Calu3 (cell line): ENCODE measurements at regions of chr16 and their contacts with region 1.

Region 1: DNA sequence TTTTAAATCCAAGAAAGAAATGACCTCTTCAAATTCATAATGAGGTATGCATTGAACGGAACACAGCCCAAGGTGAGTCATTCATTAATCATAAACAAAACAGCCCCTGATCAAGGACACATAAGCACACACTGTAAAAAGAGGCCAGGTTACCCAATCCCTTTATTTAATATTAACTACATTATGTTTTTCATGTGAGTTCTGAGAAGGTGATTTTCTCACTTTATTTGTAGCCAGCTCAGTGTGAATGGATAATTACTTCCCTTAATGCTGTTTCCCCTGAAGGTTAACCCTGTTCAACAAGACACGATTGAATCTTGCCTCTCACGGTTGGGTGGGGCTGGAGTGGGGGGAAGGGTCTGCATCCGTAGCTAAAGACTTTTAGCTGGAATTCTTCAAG is 257.3 kb upstream of the SALL1 start:
- DNase-seq: peak; percentile 70
- H3K4me3 Mint-ChIP-seq: peak overlapping the region; percentile 33
- H3K27ac Mint-ChIP-seq: peak overlapping the region; percentile 92
- H3K4me1 Mint-ChIP-seq: peaks cover 90% of the 10 kb centered on the region
- H3K27me3 Mint-ChIP-seq: no peaks in the 10 kb centered on the region
- CTCF ChIP-seq: no peak

Region 2: DNA sequence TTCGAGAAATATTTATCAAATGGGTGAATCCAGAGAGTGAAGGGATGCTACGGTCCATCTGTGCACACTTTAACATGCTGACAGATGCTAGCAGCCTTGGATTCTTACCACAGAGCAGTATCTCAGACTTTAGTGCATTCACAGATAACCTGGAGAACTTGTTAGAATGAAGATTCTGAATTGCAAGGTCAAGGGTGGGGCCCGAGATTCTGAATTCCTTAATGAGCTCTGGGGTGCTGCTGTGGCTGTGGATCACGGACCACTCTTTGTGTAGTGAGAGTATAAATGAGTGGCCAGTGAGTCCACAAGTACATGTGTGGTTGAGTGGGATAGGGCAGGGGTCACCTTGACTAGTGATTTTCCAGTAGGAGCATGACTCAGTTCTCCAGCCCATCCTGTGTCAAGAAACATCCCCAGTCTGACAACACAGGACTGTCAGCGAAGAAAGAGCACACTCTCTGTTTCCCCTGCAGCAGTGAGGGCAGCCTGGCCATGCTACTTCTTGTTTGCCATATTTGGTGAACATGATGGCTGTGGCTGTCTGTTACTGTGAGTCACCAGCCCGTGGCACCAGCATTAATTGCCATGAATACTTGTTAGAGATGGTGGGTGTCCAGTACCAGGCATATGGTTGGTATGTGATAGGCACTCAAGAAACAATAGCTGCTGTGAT is 244.3 kb before region 1 on chr16:
- CTCF ChIA-PET with region 1: no interaction called
- intact Hi-C with region 1: loop called (anchors 10 kb)
- DNase-seq: peak; percentile 19
- H3K4me3 Mint-ChIP-seq: no peak overlapping the region
- H3K27ac Mint-ChIP-seq: no peak overlapping the region
- H3K4me1 Mint-ChIP-seq: peaks cover 8% of the 10 kb centered on the region
- H3K27me3 Mint-ChIP-seq: peaks cover 30% of the 10 kb centered on the region
- CTCF ChIP-seq: no peak

Region 3: GRCh38 chr16:51243936-51244436 is 164.4 kb before region 1 on chr16:
- CTCF ChIA-PET with region 1: no interaction called
- intact Hi-C with region 1: loop called (anchors 10 kb)
- DNase-seq: peak; percentile 60
- H3K4me3 Mint-ChIP-seq: no peak overlapping the region
- H3K27ac Mint-ChIP-seq: no peak overlapping the region
- H3K4me1 Mint-ChIP-seq: peaks cover 22% of the 10 kb centered on the region
- H3K27me3 Mint-ChIP-seq: peaks cover 93% of the 10 kb centered on the region
- CTCF ChIP-seq: no peak

Region 4: DNA sequence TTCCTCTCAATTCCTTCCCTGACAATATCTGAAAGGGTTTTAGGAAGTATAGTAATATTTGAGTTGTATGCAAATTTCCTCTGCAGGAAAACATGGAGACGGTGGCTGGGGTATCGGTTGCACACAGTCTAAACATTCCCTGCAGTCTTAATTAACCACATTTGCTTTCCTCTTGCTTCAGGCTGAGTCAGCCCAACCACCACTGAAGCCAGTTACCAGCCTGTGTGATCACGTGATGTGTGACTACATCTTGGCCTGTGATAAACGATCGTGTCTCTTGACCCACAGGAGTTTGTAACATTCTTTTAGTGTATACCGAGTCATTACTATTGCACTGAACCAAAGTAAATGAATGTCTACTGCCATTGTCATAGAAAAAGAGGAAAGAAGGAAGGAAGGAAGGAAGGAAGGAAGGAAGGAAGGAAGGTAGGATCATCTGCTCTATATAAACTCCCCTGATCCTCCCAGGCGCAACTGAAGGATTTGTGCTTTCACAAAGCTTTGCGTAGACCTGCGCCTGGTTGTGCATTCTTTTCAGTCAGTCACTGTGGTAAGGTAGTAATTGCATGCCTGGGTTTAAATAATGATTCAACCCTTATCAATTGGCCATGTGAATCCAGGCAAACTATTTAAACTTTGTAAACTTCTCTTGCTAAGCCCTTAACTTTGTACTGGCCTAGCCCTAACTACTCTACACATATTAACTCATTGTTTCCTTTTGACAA is 23.3 kb after region 1 on chr16:
- CTCF ChIA-PET with region 1: interaction called, 3 read pairs
- intact Hi-C with region 1: loop called (anchors 2 kb)
- DNase-seq: peak; percentile 78
- H3K4me3 Mint-ChIP-seq: peak overlapping the region; percentile 36
- H3K27ac Mint-ChIP-seq: peak overlapping the region; percentile 74
- H3K4me1 Mint-ChIP-seq: peaks cover 12% of the 10 kb centered on the region
- H3K27me3 Mint-ChIP-seq: no peaks in the 10 kb centered on the region
- CTCF ChIP-seq: no peak